ENCODE measurements at regions of chr1 and their contacts with region 1.

Region 1: DNA sequence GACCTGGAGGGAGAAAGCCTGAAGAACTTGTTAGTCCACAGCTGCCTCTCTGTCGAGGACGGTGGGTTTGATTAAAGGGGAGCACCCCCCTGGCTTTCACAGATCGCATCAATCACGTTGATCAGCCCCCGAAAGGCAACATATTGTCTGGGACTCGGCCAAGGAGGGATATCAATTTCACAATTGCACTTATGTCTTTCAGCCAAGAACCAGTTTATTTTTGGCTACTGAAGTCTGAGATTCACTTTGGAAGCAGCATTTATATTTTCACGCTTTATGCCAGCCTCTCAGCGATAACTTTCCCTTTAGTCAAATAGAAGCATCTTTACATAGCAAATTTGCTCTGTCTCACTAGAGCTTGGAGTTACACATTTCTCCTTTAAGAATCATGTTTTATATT is 253.2 kb upstream of the RRP15 start:
- DNase-seq: no peak
- H3K4me3 ChIP-seq: no peak overlapping the region
- H3K4me3 Mint-ChIP-seq: no peak overlapping the region
- H3K27ac Mint-ChIP-seq: no peak overlapping the region
- H3K4me1 ChIP-seq: no peaks in the 10 kb centered on the region
- H3K4me1 Mint-ChIP-seq: no peaks in the 10 kb centered on the region
- H3K27me3 ChIP-seq: no peaks in the 10 kb centered on the region
- H3K27me3 Mint-ChIP-seq: no peaks in the 10 kb centered on the region
- CTCF ChIP-seq: no peak

Region 2: GRCh38 chr1:216793303-216793702 is 1238.6 kb before region 1 on chr1:
- CTCF ChIA-PET with region 1: no interaction called
- POLR2A ChIA-PET with region 1: no interaction called
- intact Hi-C with region 1: loop called (anchors 5 kb)
- DNase-seq: peak; percentile 14 to 41
- H3K4me3 ChIP-seq: no peak overlapping the region
- H3K4me3 Mint-ChIP-seq: no peak overlapping the region
- H3K27ac Mint-ChIP-seq: no peak overlapping the region
- H3K4me1 ChIP-seq: no peaks in the 10 kb centered on the region
- H3K4me1 Mint-ChIP-seq: no peaks in the 10 kb centered on the region
- H3K27me3 ChIP-seq: no peaks in the 10 kb centered on the region
- H3K27me3 Mint-ChIP-seq: no peaks in the 10 kb centered on the region
- CTCF ChIP-seq: peak in 1 of 2 experiments; percentile 12

Region 3: DNA sequence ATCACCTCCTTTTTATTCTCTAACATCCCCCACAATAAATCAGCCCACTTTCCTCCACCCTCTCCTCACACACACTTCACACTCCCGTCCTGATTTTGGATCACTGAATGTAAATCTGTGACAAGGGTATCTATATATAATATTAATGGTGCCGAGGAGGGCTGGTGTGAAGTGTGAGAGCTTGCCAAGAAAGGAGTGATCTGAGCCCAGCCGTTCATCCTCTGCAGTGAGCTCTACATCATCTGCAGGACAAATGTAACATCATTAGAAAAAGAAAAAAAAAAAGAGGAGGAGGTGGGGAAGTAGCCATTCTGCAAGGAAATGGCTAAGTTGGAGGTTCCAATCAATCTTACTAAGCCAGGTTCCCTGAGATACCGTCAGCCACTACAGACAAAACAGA is 38.5 kb before region 1 on chr1:
- CTCF ChIA-PET with region 1: no interaction called
- POLR2A ChIA-PET with region 1: no interaction called
- intact Hi-C with region 1: loop called (anchors 5 kb)
- DNase-seq: no peak
- H3K4me3 ChIP-seq: no peak overlapping the region
- H3K4me3 Mint-ChIP-seq: no peak overlapping the region
- H3K27ac Mint-ChIP-seq: no peak overlapping the region
- H3K4me1 ChIP-seq: no peaks in the 10 kb centered on the region
- H3K4me1 Mint-ChIP-seq: no peaks in the 10 kb centered on the region
- H3K27me3 ChIP-seq: no peaks in the 10 kb centered on the region
- H3K27me3 Mint-ChIP-seq: peaks cover 6% of the 10 kb centered on the region
- CTCF ChIP-seq: no peak

Region 4: GRCh38 chr1:218101409-218101808 is 69.5 kb after region 1 on chr1:
- CTCF ChIA-PET with region 1: no interaction called
- POLR2A ChIA-PET with region 1: no interaction called
- intact Hi-C with region 1: no loop called
- DNase-seq: no peak
- H3K4me3 ChIP-seq: no peak overlapping the region
- H3K4me3 Mint-ChIP-seq: no peak overlapping the region
- H3K27ac Mint-ChIP-seq: no peak overlapping the region
- H3K4me1 ChIP-seq: no peaks in the 10 kb centered on the region
- H3K4me1 Mint-ChIP-seq: no peaks in the 10 kb centered on the region
- H3K27me3 ChIP-seq: no peaks in the 10 kb centered on the region
- H3K27me3 Mint-ChIP-seq: peaks cover 3% of the 10 kb centered on the region
- CTCF ChIP-seq: no peak

Measured in Caco-2 (cell line).